Tibial artery (tissue), 4 donors: ENCODE measurements at regions of chr20 and their contacts with region 1.

Region 1: GRCh38 chr20:10558635-10559187 is 115.1 kb downstream of the JAG1 start:
- DNase-seq: no peak
- H3K4me3 ChIP-seq: peak overlapping the region; percentile 7 to 30
- H3K27ac ChIP-seq: peak overlapping the region; percentile 69 to 78
- H3K4me1 ChIP-seq: peaks cover 0 to 69% (median 35%) of the 10 kb centered on the region in 4 donors
- H3K27me3 ChIP-seq: no peaks in the 10 kb centered on the region
- CTCF ChIP-seq: peak in 1 of 2 experiments; percentile 25

Region 2: DNA sequence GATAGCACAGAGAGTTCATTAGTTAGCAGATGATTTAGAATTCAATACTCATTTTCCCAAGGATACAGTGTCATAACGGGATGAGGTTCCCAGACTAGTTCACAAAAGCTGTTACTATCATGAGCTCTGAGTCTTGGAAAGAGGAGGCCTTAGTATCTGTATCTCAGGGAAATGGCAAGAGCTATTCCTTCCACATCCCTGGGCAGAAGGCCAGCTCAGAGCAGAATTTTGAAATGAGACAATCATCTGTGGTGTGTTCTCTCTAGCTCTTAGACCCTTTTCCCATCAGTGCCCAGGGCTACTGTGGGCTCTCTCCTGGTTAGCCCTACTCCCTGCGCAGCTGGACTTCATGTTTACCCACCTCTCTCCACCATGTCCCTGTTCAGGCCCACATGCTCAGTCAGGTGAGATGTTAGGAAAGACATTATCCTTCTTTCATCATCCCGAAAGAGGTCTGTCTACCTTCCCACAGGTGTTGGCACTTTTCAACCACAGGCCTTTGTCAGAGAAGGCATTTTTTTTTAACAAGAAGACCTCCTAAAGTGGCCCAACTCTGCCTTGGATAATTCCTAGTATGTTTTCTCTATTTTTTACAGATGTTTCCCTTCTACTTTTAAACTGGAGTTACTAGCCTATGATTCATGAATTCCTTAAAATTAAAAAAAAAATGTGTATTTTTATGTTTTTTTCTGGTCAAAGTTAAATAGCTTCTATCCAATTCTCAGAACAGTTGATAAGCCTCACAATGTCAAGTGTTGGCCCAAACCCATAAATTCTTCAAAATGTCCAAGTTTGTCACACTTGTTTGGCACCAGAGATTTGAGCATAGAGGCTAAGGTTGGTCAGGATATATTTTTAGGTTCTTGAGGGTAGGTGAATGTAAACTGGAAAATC is 50.8 kb after region 1 on chr20:
- intact Hi-C with region 1: loop called (anchors 5 kb)
- DNase-seq: peak; percentile 84 to 86
- H3K4me3 ChIP-seq: no peak overlapping the region
- H3K27ac ChIP-seq: peak overlapping the region; percentile 88 to 91
- H3K4me1 ChIP-seq: peaks cover 10 to 66% (median 32%) of the 10 kb centered on the region in 4 donors
- H3K27me3 ChIP-seq: no peaks in the 10 kb centered on the region
- CTCF ChIP-seq: no peak

Region 3: GRCh38 chr20:10647465-10647864 is 88.8 kb after region 1 on chr20:
- intact Hi-C with region 1: loop called (anchors 5 kb)
- DNase-seq: peak; percentile 26 to 68
- H3K4me3 ChIP-seq: no peak overlapping the region
- H3K27ac ChIP-seq: peak overlapping the region; percentile 99
- H3K4me1 ChIP-seq: peaks cover 0 to 100% (median 77%) of the 10 kb centered on the region in 4 donors
- H3K27me3 ChIP-seq: no peaks in the 10 kb centered on the region
- CTCF ChIP-seq: peak; percentile 28 to 40

Region 4: DNA sequence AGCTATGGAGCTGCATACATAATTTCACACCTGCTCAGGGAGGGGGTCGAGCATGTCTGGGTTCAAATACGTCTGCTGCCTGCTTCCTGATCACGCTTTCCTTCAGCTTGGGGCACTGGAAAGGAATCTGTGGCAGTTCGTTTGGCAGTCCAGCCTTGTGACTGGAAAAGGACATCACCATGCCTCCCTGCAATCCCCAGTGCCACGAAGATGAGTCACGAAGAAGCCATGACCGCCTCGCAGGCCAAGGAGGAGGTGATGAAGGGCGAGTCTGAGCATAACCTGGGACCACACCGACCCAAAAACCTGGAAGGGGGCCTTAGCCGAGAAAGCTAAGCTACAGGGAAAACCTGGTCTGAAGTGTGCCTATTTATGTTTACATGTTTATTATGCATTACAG is 102.0 kb after region 1 on chr20:
- intact Hi-C with region 1: loop called (anchors 5 kb)
- DNase-seq: peak; percentile 65 to 87
- H3K4me3 ChIP-seq: peak overlapping the region in 1 of 2 donors; percentile 31
- H3K27ac ChIP-seq: peak overlapping the region; percentile 99
- H3K4me1 ChIP-seq: peaks cover 0 to 100% (median 84%) of the 10 kb centered on the region in 4 donors
- H3K27me3 ChIP-seq: no peaks in the 10 kb centered on the region
- CTCF ChIP-seq: no peak